H1 (cell line): ENCODE measurements at regions of chr6 and their contacts with region 1.

Region 1: GRCh38 chr6:41775293-41776181 is 4.2 kb downstream of the FRS3 start:
- DNase-seq: peak; percentile 38 to 57
- H3K4me3 ChIP-seq: no peak overlapping the region
- H3K27ac ChIP-seq: no peak overlapping the region
- H3K4me1 ChIP-seq: peaks cover 0 to 5% (median 3%) of the 10 kb centered on the region in 4 experiments; a peak in 1 of 7 replicates
- H3K27me3 ChIP-seq: no peaks in the 10 kb centered on the region; a peak in 1 of 7 replicates
- CTCF ChIP-seq: peak; percentile 96 to 98 (median 98)
- EP300 ChIP-seq: no peak
- POLR2A ChIP-seq: no peak
- RAD21 ChIP-seq: peak; percentile 87 to 92

Region 2: GRCh38 chr6:41581381-41581991 is 194.1 kb before region 1 on chr6:
- CTCF ChIA-PET with region 1: no interaction called
- POLR2A ChIA-PET with region 1: no interaction called
- DNase-seq: no peak
- H3K4me3 ChIP-seq: no peak overlapping the region
- H3K27ac ChIP-seq: no peak overlapping the region
- H3K4me1 ChIP-seq: peaks cover 16 to 48% (median 36%) of the 10 kb centered on the region in 4 experiments
- H3K27me3 ChIP-seq: no peaks in the 10 kb centered on the region
- CTCF ChIP-seq: no peak
- EP300 ChIP-seq: no peak
- POLR2A ChIP-seq: no peak
- RAD21 ChIP-seq: no peak

Region 3: DNA sequence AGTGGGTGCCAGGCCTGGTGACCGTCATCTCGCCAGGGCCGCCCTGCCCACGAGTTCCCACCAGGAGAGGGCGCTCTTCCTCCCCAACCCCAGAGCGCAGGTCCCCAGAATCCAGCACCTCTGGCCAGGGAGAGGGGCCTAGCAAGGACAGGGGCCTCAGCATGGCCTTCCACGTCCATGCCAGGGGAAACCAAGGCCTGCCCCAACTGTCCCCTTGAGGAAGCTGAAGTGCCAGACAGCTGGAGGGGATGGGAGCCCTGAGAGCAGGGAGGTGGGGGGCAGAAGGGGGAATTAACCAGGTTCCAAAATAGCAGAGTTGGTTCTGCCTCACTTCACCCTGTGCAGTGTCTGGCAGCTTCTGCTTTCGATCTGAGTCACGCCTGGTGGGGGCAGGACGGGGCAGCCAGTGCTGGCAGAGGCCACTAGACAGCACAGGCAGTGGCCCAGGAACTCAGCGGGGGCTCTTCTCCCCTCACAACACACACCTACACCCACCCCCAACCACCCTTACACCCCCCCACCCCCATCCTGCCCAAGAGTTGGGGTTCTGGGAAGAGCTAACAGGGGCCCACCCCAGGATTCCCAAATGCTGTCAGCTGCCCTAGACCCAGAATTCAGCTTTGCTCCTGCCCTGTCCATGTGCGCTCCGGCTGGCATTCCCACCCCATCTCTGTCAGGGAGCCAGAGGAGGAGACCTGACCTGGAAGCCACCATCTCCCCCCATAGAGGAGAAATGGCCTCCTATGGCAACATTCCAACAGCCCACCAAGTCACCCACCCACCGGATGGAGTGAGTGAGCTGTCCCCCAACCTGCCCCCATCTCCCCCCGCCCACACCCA is 69.3 kb before region 1 on chr6:
- CTCF ChIA-PET with region 1: interaction called, 58 read pairs
- POLR2A ChIA-PET with region 1: no interaction called
- DNase-seq: peak; percentile 56 to 92
- H3K4me3 ChIP-seq: no peak overlapping the region
- H3K27ac ChIP-seq: no peak overlapping the region
- H3K4me1 ChIP-seq: peaks cover 0 to 8% (median 3%) of the 10 kb centered on the region in 4 experiments; a peak in 4 of 7 replicates
- H3K27me3 ChIP-seq: no peaks in the 10 kb centered on the region; a peak in 1 of 7 replicates
- CTCF ChIP-seq: peak in 2 of 3 experiments; percentile 92 to 97; a peak in 3 of 4 replicates
- EP300 ChIP-seq: no peak
- POLR2A ChIP-seq: no peak
- RAD21 ChIP-seq: peak; percentile 68 to 81

Region 4: GRCh38 chr6:41723530-41724227 is 51.9 kb before region 1 on chr6:
- CTCF ChIA-PET with region 1: interaction called, 13 read pairs
- POLR2A ChIA-PET with region 1: no interaction called
- DNase-seq: no peak
- H3K4me3 ChIP-seq: no peak overlapping the region
- H3K27ac ChIP-seq: no peak overlapping the region
- H3K4me1 ChIP-seq: peaks cover 0 to 13% (median 8%) of the 10 kb centered on the region in 4 experiments; a peak in 5 of 7 replicates
- H3K27me3 ChIP-seq: no peaks in the 10 kb centered on the region
- CTCF ChIP-seq: no peak
- EP300 ChIP-seq: no peak
- POLR2A ChIP-seq: no peak
- RAD21 ChIP-seq: no peak

Region 5: GRCh38 chr6:41741625-41742489 is 33.7 kb before region 1 on chr6:
- CTCF ChIA-PET with region 1: interaction called, 21 read pairs
- POLR2A ChIA-PET with region 1: no interaction called
- DNase-seq: no peak
- H3K4me3 ChIP-seq: no peak overlapping the region
- H3K27ac ChIP-seq: no peak overlapping the region
- H3K4me1 ChIP-seq: no peaks in the 10 kb centered on the region; a peak in 1 of 7 replicates
- H3K27me3 ChIP-seq: no peaks in the 10 kb centered on the region; a peak in 2 of 7 replicates
- CTCF ChIP-seq: no peak
- EP300 ChIP-seq: no peak
- POLR2A ChIP-seq: no peak
- RAD21 ChIP-seq: no peak

Region 6: DNA sequence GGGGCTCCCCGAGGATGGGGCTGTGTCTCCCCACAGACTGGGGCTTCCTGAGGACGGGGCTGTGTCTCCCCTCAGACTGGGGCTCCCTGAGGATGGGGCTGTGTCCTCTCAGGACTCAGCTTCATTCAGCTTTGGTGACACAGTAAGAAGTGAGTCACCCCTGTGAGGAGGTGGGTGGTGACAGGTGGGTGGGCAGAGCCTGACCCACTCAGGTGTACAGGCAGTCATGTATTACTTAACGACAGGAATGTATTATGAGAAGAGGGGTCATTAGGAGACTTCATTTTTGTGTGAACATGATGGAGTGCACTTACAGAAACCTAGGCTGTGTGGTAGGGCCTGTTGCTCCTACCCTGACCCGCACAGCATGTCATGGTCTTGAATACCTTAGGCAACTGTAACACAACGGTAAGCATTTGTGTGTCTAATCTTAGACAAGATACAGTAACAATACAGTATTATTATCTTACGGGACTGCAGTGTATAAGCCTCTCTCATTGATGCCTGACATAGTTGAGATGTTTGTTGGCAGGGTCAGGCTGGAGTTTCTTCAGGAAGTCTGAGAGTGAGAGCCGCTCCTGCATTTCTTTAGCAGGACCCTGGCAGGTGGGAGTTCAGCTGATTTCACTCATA is 17.5 kb before region 1 on chr6:
- CTCF ChIA-PET with region 1: interaction called, 37 read pairs
- POLR2A ChIA-PET with region 1: no interaction called
- DNase-seq: no peak
- H3K4me3 ChIP-seq: no peak overlapping the region
- H3K27ac ChIP-seq: no peak overlapping the region
- H3K4me1 ChIP-seq: peaks cover 0 to 3% (median 0%) of the 10 kb centered on the region in 4 experiments; a peak in 2 of 7 replicates
- H3K27me3 ChIP-seq: no peaks in the 10 kb centered on the region; a peak in 1 of 7 replicates
- CTCF ChIP-seq: no peak
- EP300 ChIP-seq: no peak
- POLR2A ChIP-seq: no peak
- RAD21 ChIP-seq: no peak

Region 7: GRCh38 chr6:41813469-41813868 is 37.9 kb after region 1 on chr6:
- CTCF ChIA-PET with region 1: no interaction called
- POLR2A ChIA-PET with region 1: no interaction called
- DNase-seq: no peak
- H3K4me3 ChIP-seq: no peak overlapping the region
- H3K27ac ChIP-seq: no peak overlapping the region
- H3K4me1 ChIP-seq: no peaks in the 10 kb centered on the region
- H3K27me3 ChIP-seq: no peaks in the 10 kb centered on the region
- CTCF ChIP-seq: no peak
- EP300 ChIP-seq: no peak
- POLR2A ChIP-seq: no peak
- RAD21 ChIP-seq: no peak